AG04449 (cell line): ENCODE measurements at regions of chr16 and their contacts with region 1.

Region 1: DNA sequence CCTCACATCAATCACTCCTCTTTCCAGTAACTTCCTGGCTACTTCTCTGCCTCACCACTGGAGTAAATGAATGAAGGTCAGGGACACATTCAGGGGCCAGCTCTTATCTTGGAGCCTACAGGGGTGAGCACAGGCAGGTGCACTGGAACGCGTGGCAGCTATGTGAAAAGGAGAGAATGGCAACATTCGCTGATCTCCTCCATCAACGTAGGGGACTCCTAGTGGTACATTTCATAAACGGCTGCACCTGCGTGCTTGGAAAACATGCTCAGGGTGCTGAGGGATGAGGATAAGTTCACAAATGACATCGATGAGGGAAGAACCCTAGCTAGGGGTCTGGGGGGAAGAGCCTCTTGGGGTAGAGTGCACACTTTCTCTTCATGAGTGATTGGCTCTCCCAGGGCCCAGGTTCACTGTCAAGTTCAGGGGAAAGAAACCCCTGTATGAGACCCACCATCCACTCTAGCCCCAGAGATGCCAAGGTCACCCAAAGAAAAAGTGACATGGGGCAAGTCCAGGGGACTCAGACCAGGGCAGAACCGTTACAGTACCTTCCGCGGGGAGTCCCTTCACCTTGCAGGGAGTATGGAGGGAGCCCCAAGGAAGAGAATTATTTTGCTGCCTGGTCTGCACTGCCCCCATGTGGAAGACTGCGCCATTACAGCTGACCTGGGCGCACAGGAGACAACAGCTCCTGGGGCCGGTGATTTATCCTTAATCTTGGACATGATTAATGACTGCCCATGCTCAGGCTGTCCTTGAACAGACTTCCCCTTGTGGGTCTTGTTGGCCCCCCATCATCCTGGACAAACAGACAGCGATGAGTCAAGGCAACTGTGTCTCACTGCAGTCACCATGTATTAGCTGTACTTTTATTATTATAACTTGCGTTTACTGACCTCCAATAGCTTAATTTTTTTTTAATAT is 30.1 kb downstream of the VAC14 start:
- DNase-seq: no peak
- H3K4me3 ChIP-seq: no peak overlapping the region
- CTCF ChIP-seq: peak; percentile 91

Region 2: GRCh38 chr16:70615945-70616344 is 154.9 kb before region 1 on chr16:
- CTCF ChIA-PET with region 1: no interaction called
- POLR2A ChIA-PET with region 1: no interaction called
- DNase-seq: no peak
- H3K4me3 ChIP-seq: no peak overlapping the region
- CTCF ChIP-seq: no peak

Region 3: DNA sequence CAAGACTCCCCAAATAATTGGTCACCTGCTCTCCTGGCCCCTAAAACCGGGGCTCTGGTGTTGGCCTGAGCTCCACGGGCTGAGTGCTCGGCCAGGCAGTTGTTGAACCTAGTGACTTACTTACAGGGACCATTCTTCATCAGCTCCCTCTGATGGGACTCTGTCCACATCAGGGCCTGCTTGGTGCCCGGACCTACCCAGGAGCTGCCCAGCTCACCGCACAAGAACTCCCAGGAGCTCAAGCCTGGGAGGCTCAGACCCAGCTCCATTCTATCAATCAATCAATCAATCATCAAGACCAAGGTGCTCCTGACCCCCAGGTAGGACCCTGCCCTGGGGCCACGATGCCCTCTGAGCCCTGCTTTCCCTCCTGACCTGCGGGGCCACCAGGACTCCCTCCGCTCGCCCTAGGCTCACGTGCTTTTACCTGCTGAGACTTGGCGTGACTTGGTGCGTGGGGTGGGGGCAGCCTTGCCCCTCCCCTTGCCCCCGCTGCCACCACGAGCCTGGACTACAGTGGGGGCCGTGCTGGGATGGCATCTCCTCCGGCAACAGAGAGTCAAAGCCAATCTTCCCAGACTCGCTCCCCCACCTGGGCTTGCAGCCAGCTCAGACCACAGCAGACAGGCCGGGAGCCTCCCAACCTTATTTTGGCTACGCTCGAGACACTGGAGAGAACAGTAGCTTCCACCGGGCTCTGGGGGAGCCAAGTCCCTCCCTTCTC is 108.8 kb before region 1 on chr16:
- CTCF ChIA-PET with region 1: interaction called, 80 read pairs
- POLR2A ChIA-PET with region 1: no interaction called
- DNase-seq: no peak
- H3K4me3 ChIP-seq: no peak overlapping the region
- CTCF ChIP-seq: no peak

Region 4: DNA sequence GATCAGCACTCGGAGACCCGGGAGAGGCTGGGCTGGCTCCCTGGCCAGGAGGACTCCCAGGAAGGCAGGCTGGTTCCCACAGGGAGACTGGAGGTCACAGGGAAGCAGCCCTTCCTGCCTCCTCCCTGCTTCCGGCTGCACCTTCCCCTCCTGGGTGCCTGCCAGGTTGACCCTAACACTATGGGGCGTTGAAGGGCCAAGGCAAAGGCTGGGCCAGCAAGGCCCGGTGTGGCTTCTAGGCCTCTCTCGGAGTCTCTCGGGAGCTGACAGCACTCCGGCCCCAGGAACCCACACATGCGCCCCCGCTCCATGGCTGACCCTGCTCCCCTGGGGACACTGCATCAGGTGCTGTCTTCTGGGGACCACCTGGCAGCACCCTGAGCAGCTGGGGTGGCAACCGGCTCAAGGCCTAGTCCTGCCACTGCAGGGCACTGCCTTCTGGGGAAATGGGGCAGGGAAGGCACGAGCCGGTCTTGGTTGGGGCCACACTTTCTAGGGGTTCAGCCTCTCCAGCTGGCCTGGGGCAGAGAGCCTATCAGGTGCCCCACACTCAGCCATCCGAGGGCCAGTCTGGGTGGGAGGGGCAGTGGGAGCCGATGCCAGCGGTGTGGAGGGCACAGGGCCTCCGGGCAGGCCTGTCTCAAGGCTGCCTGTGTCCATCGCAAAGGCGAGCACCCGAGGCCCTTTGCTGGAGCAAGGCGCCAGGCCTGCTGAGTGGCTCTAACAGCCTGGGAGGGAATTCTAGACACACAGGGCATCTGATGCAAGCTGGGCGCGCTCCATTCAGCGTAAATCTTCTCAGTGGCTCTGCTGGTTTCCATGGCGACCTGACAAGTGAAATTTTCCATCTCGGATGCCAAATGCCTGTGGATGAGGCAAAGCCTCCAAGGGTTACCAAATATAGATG is 79.4 kb before region 1 on chr16:
- CTCF ChIA-PET with region 1: interaction called, 60 read pairs
- POLR2A ChIA-PET with region 1: interaction called, 3 read pairs
- DNase-seq: peak; percentile 94
- H3K4me3 ChIP-seq: no peak overlapping the region
- CTCF ChIP-seq: no peak

Region 5: GRCh38 chr16:70715055-70715858 is 55.6 kb before region 1 on chr16:
- CTCF ChIA-PET with region 1: interaction called, 16 read pairs
- POLR2A ChIA-PET with region 1: no interaction called
- DNase-seq: peak; percentile 89
- H3K4me3 ChIP-seq: no peak overlapping the region
- CTCF ChIP-seq: no peak

Region 6: GRCh38 chr16:70750893-70751475 is 19.9 kb before region 1 on chr16:
- CTCF ChIA-PET with region 1: interaction called, 106 read pairs
- POLR2A ChIA-PET with region 1: interaction called, 3 read pairs
- DNase-seq: peak; percentile 40
- H3K4me3 ChIP-seq: no peak overlapping the region
- CTCF ChIP-seq: no peak

Region 7: DNA sequence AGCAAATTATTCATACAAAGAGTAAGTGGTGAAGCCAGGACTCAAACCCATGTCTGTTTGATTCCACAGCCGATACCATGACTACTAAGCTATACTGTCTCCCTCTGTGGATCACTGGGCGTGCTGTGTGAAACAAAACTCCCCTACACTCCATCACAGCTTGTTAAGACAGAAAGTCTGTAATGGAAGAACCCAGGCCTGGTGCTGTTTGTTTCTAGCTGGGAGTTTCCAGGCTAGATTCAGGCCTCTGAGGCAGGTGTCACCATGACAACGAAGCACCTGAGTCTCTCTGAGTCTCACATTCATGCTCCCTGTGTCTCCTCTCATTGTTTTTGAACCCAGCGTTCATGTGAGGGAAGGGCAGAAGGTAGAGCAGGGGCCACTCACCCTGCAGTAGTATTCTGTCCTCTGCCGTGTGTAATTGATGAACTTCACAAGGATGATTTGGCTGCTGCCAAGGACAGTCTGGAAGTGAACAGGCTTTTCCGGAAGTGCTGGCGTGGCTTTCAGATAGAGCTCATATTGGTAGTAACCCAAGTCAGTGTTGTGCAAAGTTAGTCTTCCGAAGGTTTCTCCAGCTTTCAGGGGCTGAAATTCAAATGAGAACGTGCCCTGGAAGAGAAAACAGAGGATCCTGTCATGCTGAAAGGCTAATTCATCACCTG is 38.6 kb after region 1 on chr16:
- CTCF ChIA-PET with region 1: no interaction called
- POLR2A ChIA-PET with region 1: no interaction called
- DNase-seq: no peak
- H3K4me3 ChIP-seq: no peak overlapping the region
- CTCF ChIP-seq: no peak